K562 (cell line): ENCODE measurements at regions of chr1 and their contacts with region 1.

Region 1: GRCh38 chr1:94335950-94336349 is 82.2 kb upstream of the ABCD3 start:
- DNase-seq: peak; percentile 27 to 75 (median 36)
- ATAC-seq: peak; percentile 89
- H3K4me3 ChIP-seq: no peak overlapping the region
- H3K27ac ChIP-seq: no peak overlapping the region
- H3K4me1 ChIP-seq: no peaks in the 10 kb centered on the region; a peak in 1 of 5 replicates
- H3K27me3 ChIP-seq: peaks cover 8 to 16% of the 10 kb centered on the region in 2 experiments; a peak in 4 of 5 replicates
- CTCF ChIP-seq: peak; percentile 73 to 94 (median 87)
- EP300 ChIP-seq: no peak
- POLR2A ChIP-seq: no peak
- RAD21 ChIP-seq: peak; percentile 93 to 94

Region 2: GRCh38 chr1:93629099-93630059 is 706.6 kb before region 1 on chr1:
- CTCF ChIA-PET with region 1: interaction called, 3 read pairs
- POLR2A ChIA-PET with region 1: no interaction called
- in situ Hi-C with region 1: no loop called
- intact Hi-C with region 1: loop called (anchors 10 kb)
- DNase-seq: peak; percentile 48 to 71 (median 52)
- ATAC-seq: peak; percentile 83
- H3K4me3 ChIP-seq: no peak overlapping the region
- H3K27ac ChIP-seq: no peak overlapping the region
- H3K4me1 ChIP-seq: no peaks in the 10 kb centered on the region
- H3K27me3 ChIP-seq: no peaks in the 10 kb centered on the region
- CTCF ChIP-seq: peak; percentile 70 to 95 (median 74)
- EP300 ChIP-seq: no peak
- POLR2A ChIP-seq: no peak
- RAD21 ChIP-seq: peak; percentile 99

Region 3: GRCh38 chr1:94025383-94026340 is 310.3 kb before region 1 on chr1:
- CTCF ChIA-PET with region 1: interaction called, 14 read pairs
- POLR2A ChIA-PET with region 1: no interaction called
- in situ Hi-C with region 1: no loop called
- intact Hi-C with region 1: no loop called
- DNase-seq: peak; percentile 48 to 53 (median 50)
- ATAC-seq: peak; percentile 68
- H3K4me3 ChIP-seq: no peak overlapping the region
- H3K27ac ChIP-seq: no peak overlapping the region
- H3K4me1 ChIP-seq: no peaks in the 10 kb centered on the region
- H3K27me3 ChIP-seq: peaks cover 19 to 55% of the 10 kb centered on the region in 2 experiments
- CTCF ChIP-seq: peak; percentile 55 to 80 (median 72)
- EP300 ChIP-seq: no peak
- POLR2A ChIP-seq: no peak
- RAD21 ChIP-seq: peak; percentile 51 to 69; a peak in 3 of 4 replicates

Region 4: DNA sequence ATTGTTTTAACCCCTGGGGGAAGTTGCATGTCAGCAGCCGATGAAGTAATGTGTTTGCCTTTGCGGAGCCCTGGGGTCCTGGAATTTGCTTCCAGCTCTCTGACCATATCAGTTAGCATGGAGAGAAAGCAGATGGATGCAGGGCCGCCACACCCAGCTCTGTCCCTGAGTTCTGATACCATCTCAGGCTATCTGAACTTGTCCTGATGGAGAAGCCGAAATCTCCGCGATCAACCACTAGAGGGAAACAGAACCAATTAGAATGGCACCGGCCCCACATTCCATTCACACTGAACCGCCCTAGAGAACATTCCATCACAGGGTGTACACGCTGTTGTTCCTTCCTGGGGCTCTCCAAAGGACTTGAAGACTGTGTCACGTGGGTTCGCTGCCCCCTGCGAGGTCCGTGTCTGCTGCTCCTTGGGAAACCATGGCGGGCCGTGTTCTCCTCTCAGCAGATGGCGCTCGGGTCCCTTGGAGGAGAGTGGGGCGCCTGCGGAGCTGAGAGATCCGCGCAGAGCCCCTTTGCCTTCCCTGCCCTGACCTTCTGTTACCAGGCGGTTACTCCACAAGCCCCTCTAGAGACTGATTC is 290.4 kb before region 1 on chr1:
- CTCF ChIA-PET with region 1: interaction called, 11 read pairs
- POLR2A ChIA-PET with region 1: no interaction called
- in situ Hi-C with region 1: loop called (anchors 5 kb)
- intact Hi-C with region 1: loop called (anchors 1 kb)
- DNase-seq: peak; percentile 55 to 68 (median 60)
- ATAC-seq: peak; percentile 94
- H3K4me3 ChIP-seq: no peak overlapping the region
- H3K27ac ChIP-seq: no peak overlapping the region
- H3K4me1 ChIP-seq: 0 out of 5 replicates have a peak, but pooled peaks cover 0 to 4% of the 10 kb centered on the region in 2 experiments
- H3K27me3 ChIP-seq: peaks cover 9 to 29% of the 10 kb centered on the region in 2 experiments; a peak in 4 of 5 replicates
- CTCF ChIP-seq: peak in 2 of 3 experiments; percentile 83 to 87
- EP300 ChIP-seq: no peak
- POLR2A ChIP-seq: no peak
- RAD21 ChIP-seq: peak; percentile 72 to 76

Region 5: DNA sequence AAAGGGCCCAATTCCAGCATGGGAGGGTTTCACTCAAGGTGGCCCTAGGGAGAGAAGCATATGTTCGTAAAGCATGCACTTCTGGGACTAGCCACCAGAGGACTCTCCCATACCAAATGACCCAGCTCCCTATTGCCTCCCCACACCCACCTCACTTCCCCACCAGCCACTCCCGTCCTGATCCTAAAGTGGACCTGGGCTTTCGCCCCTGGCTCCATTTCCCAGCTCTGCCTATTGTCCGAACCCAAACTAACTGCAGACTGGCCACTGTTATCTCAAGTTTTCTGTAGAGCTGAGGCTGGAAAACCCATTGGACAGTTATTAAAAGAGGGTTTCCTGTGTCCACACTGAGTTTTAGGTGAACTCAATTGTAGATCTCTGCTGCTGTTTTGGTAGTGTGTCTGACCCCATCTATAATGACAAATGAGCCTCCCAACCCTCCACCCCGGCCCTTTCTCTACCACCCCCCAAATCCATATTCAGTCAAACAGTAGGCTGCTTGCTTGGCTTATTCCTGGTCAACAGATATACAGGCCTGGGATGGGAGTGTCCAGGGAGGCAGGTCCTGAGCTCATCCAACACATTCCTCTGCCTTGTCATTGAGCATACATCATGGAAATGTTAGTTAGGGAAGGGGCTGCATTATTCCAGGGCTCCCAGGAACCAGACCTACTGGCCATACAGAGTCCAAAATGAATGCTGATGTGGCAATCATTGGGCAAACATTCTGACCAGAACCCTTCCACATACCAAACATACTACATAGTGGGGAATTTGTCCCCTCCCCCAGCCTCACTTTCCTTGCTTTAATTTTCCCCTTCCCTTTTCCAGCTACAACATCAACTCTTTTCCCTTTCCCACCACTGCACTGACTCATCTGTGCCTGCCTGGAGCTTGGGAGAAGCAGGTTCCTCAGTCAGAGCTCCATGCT is 274.2 kb before region 1 on chr1:
- CTCF ChIA-PET with region 1: interaction called, 44 read pairs
- POLR2A ChIA-PET with region 1: no interaction called
- in situ Hi-C with region 1: no loop called
- intact Hi-C with region 1: loop called (anchors 1 kb)
- DNase-seq: peak; percentile 55 to 77 (median 73)
- ATAC-seq: peak; percentile 98
- H3K4me3 ChIP-seq: no peak overlapping the region
- H3K27ac ChIP-seq: no peak overlapping the region
- H3K4me1 ChIP-seq: no peaks in the 10 kb centered on the region
- H3K27me3 ChIP-seq: peaks cover 0 to 6% of the 10 kb centered on the region in 2 experiments; a peak in 2 of 5 replicates
- CTCF ChIP-seq: peak; percentile 79 to 80 (median 79)
- EP300 ChIP-seq: no peak
- POLR2A ChIP-seq: no peak
- RAD21 ChIP-seq: peak; percentile 76 to 89

Region 6: DNA sequence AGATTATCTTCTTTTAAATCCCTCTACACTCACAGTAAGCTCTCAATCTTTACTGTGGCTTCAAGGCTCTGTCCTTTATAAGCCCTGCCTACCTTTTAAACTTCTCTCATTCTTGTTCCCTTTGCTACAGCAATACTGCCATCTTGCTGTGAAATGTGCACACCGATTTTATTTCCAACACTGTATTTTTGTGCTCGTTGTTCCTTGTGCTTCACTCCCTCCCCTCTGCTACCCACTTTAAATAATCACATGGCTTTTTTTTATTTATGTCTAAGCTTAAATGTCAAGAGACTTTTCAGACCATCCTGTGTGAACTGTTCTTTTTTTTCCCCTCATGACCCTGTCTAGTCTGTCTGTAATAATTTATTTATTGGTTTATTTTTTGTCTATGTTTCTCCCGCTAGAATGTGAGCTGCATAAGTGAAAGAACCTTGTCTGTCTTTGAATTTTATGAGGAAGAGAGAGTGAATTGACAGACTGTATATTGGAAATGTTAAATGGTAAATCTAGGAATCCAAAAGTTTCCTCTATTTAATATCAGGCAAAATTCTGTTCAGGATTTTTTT is 127.9 kb after region 1 on chr1:
- CTCF ChIA-PET with region 1: interaction called, 3 read pairs
- POLR2A ChIA-PET with region 1: no interaction called
- in situ Hi-C with region 1: no loop called
- intact Hi-C with region 1: loop called (anchors 1 kb)
- DNase-seq: peak; percentile 14 to 52 (median 24)
- ATAC-seq: peak; percentile 92
- H3K4me3 ChIP-seq: no peak overlapping the region
- H3K27ac ChIP-seq: no peak overlapping the region
- H3K4me1 ChIP-seq: 0 out of 5 replicates have a peak, but pooled peaks cover 0 to 2% of the 10 kb centered on the region in 2 experiments
- H3K27me3 ChIP-seq: no peaks in the 10 kb centered on the region
- CTCF ChIP-seq: peak; percentile 58 to 81 (median 68); a peak in 5 of 6 replicates
- EP300 ChIP-seq: no peak
- POLR2A ChIP-seq: no peak
- RAD21 ChIP-seq: peak; percentile 87